ENCODE measurements at regions of chr11 and their contacts with region 1.

Region 1: GRCh38 chr11:60887556-60887955 is 18.8 kb downstream of the PRPF19 start:
- DNase-seq: peak; percentile 39
- CTCF ChIP-seq: peak; percentile 52

Region 2: DNA sequence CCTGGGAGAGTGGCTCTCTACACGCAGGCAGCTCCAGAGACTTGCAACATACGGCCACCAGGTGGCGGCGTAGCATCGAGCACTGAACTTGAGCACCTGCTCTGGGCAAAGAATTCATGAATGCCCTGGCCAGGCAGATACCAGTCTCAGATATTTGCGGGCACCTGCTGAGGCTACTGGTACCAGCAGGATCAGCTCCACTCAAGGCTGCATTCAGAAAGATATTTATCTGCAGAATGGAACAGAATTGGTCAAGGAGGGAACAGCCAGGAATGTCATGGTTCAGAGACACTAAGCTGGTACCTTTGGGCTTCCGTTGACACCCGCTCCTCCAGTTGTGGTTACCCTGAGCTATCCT is 56.4 kb before region 1 on chr11:
- in situ Hi-C with region 1: loop called (anchors 10 kb)
- DNase-seq: peak; percentile 83
- CTCF ChIP-seq: peak; percentile 95

Region 3: DNA sequence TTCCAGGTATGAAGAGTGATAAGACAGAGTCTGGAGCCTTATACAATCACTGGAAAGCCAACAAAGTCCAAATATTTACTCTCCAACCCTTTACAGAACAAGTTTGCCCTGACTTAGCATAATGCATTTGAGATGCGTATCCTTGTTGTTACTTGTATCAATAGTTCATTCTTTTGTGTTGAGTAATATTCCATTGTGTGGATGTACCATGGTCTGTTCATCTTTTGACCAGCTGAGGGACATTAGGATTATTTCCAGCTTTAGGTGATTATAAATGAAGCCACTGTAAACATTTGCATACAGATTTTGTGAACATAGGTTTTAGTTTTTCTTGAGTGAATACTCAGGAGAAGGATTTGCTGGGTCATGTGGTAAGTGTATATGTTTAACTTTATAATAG is 552.1 kb after region 1 on chr11:
- in situ Hi-C with region 1: no loop called
- DNase-seq: no peak
- CTCF ChIP-seq: no peak